ENCODE measurements at regions of chr21 and their contacts with region 1.

Region 1: DNA sequence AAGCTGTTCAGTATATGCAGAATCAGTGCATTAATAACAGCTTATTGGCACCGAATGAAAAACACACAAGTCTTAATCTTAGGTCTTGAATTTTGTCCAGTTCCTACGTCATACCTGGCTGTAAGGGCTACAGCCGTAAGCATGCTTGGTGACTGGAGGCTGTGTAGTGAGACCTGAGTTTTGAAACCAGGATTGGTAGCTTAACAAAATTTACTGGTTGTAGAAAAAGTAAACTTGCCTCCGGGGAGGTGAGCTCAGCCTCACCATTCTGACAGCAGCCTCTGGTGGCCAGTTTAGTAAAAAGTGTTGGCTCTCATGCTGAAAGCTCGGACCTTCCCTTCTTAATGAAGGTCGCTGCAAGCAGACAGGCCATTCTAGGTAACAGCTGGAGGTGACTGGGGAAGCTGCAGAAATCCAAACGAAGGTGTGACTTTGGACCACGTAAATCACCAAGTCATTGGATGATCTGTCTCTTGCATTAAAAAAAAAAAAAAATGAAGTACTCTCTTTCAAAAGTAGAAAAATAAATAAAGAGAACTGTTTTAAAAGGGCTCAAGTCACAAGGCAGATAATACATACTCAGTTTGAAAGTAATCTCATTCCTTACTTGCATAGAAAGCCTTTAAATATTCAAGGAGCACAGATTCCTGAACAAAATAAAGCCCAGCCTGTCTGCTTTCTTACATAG is 48.9 kb downstream of the HLCS start:
- DNase-seq: peak; percentile 32
- H3K4me3 ChIP-seq: no peak overlapping the region
- H3K27ac ChIP-seq: no peak overlapping the region
- H3K27me3 ChIP-seq: no peaks in the 10 kb centered on the region
- CTCF ChIP-seq: peak; percentile 88

Region 2: GRCh38 chr21:36716836-36717235 is 200.8 kb before region 1 on chr21:
- CTCF ChIA-PET with region 1: interaction called, 12 read pairs
- POLR2A ChIA-PET with region 1: no interaction called
- DNase-seq: no peak
- H3K4me3 ChIP-seq: no peak overlapping the region
- H3K27ac ChIP-seq: no peak overlapping the region
- H3K27me3 ChIP-seq: peaks cover 76% of the 10 kb centered on the region
- CTCF ChIP-seq: no peak

Region 3: GRCh38 chr21:36747815-36748383 is 169.7 kb before region 1 on chr21:
- CTCF ChIA-PET with region 1: interaction called, 30 read pairs
- POLR2A ChIA-PET with region 1: no interaction called
- DNase-seq: no peak
- H3K4me3 ChIP-seq: peak overlapping the region; percentile 52
- H3K27ac ChIP-seq: no peak overlapping the region
- H3K27me3 ChIP-seq: peaks cover 8% of the 10 kb centered on the region
- CTCF ChIP-seq: peak; percentile 25